PC-3 (cell line): ENCODE measurements at regions of chr6 and their contacts with region 1.

Region 1: DNA sequence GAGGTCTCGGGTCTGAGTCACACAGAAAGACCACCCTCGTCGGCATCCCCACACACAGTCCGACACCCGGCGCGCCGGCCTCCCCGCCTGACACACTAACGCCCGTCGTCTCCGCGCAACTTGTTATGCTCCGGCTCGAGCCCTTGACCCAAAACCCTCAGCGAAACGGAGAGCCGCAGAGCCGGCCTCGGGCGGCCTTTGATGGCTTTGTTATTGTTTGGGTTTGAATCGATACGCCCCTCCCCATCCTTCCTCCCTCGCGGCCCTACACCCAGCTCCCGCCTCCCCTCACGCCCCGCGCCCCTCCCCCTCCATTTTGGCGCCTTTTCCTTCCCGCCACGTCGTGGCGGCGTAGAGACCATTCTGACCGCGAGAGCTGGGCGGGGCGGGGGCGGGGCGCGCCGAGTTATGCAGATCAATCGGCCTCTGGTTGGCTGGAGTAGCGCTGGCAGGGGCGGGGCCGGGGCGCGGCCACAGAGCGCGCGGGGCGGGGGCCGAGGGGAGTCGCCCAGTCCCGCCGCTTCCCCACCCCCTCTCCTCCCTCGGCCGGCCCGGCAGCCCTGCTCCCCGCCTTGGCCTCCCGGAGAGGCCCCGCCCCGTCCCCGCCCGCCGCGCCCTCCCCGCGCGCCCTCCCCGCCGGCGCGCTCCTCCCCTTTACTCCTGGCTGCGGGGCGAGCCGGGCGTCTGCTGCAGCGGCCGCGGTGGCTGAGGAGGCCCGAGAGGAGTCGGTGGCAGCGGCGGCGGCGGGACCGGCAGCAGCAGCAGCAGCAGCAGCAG is at the start of gene PIM1:
- DNase-seq: peak; percentile 95
- ATAC-seq: peak; percentile 69
- H3K4me3 ChIP-seq: peak within 1 kb of the TSS; percentile 80
- H3K27ac ChIP-seq: peak within 1 kb of the TSS; percentile 78
- H3K4me1 ChIP-seq: peaks cover 13% of the 10 kb centered on the region
- H3K27me3 ChIP-seq: no peaks in the 10 kb centered on the region
- CTCF ChIP-seq: no peak
- total RNA-seq, gene PIM1: 74.1 and 93.3 TPM in 2 replicates

Region 2: DNA sequence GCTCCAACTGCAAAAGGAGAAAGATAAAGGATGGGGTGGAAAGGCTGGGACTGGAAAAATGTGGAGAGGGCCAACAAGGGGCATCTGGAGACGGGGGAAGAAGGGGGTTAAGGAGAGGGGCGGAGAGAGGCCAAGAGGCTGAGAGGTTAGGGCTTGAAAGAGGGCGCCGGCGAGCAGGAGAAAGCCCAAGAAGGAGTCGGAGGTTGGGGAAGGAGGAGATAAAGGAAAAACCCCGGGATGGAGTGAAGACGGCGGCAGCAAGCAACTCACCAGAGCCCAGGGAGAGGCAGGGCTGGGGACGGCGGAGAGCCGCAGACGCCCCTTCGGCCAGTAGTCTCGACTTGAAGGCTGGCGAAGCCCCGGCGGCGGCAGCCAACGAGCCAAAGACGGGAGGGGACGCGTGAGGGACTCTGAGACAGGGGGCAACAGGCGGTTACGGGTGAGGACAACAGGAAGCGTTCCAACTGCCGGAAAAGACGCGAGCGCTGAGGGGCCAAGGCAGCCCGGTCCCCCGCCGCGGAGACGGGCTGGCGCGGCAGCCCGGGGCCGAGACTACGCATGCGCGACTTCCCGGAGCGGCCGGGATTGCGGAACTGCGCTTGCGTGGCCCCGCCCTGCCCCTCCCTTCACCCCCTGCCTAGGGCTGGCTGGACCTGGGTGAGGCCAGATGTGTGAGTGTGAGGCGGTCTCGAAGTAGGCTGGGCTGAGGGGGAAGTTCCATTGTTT is 622.6 kb before region 1 on chr6 and contains the start of gene STK38:
- CTCF ChIA-PET with region 1: no interaction called
- POLR2A ChIA-PET with region 1: no interaction called
- intact Hi-C with region 1: no loop called
- DNase-seq: peak; percentile 89
- ATAC-seq: peak; percentile 91
- H3K4me3 ChIP-seq: peak within 1 kb of the TSS; percentile 94
- H3K27ac ChIP-seq: peak within 1 kb of the TSS; percentile 55
- H3K4me1 ChIP-seq: peaks cover 34% of the 10 kb centered on the region
- H3K27me3 ChIP-seq: no peaks in the 10 kb centered on the region
- CTCF ChIP-seq: peak; percentile 52
- total RNA-seq, gene STK38: 25.7 and 26.9 TPM in 2 replicates

Region 3: DNA sequence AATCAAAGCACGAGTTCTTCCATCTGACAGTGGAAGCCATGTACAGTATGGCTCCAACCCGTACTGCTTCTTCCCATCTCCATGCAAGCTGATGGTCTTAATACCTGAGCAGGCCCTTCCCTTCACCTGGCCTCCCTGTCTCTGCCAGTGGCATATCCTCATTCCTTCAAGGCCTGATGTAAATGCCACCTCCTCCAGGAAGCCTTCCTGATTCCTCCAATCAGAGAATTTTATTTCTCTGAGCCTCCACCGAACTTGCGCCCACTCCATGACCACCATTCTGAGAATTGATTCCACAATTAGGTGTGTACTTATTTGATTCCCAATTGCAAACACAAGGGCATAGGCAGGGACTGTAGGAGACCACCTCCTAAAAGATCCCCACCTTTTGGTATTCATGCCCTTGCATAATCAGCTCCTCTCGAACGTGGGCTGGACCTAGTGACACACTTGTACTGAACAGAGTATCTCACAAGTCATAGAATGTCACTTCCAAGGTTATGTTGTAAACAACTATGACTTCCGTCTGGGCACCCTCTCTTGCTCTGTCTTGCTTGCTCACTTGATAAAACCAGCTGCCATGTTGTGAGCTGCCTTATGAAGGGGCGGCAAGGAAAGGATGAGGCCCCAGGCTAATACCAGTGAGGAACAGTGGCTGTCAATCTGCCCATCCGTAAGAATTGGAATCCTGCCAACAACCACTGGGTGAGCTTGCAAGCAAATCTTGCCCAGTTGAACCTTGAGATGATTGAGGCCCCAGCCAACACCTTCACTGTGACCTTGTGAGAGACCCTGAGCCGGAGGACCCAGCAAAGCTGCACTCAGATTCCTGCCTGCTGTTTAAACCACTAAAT is 369.2 kb before region 1 on chr6:
- CTCF ChIA-PET with region 1: no interaction called
- POLR2A ChIA-PET with region 1: no interaction called
- intact Hi-C with region 1: no loop called
- DNase-seq: no peak
- ATAC-seq: no peak
- H3K4me3 ChIP-seq: no peak overlapping the region
- H3K27ac ChIP-seq: no peak overlapping the region
- H3K4me1 ChIP-seq: no peaks in the 10 kb centered on the region
- H3K27me3 ChIP-seq: no peaks in the 10 kb centered on the region
- CTCF ChIP-seq: no peak

Region 4: GRCh38 chr6:36874443-36875249 is 295.0 kb before region 1 on chr6 and contains the start of gene PPIL1:
- CTCF ChIA-PET with region 1: no interaction called
- POLR2A ChIA-PET with region 1: interaction called, 17 read pairs
- intact Hi-C with region 1: no loop called
- DNase-seq: peak; percentile 93
- ATAC-seq: peak; percentile 93
- H3K4me3 ChIP-seq: peak within 1 kb of the TSS; percentile 92
- H3K27ac ChIP-seq: peak within 1 kb of the TSS; percentile 86
- H3K4me1 ChIP-seq: peaks cover 18% of the 10 kb centered on the region
- H3K27me3 ChIP-seq: no peaks in the 10 kb centered on the region
- CTCF ChIP-seq: no peak
- total RNA-seq, gene PPIL1: 37.3 and 39.9 TPM in 2 replicates

Region 5: GRCh38 chr6:37018198-37019064 is 151.3 kb before region 1 on chr6:
- CTCF ChIA-PET with region 1: interaction called, 3 read pairs
- POLR2A ChIA-PET with region 1: interaction called, 10 read pairs
- intact Hi-C with region 1: loop called (anchors 1 kb)
- DNase-seq: peak; percentile 94
- ATAC-seq: peak; percentile 96
- H3K4me3 ChIP-seq: no peak overlapping the region
- H3K27ac ChIP-seq: peak overlapping the region; percentile 70
- H3K4me1 ChIP-seq: peaks cover 36% of the 10 kb centered on the region
- H3K27me3 ChIP-seq: no peaks in the 10 kb centered on the region
- CTCF ChIP-seq: peak; percentile 85

Region 6: GRCh38 chr6:37051138-37052026 is 118.3 kb before region 1 on chr6:
- CTCF ChIA-PET with region 1: interaction called, 7 read pairs
- POLR2A ChIA-PET with region 1: interaction called, 3 read pairs
- intact Hi-C with region 1: loop called (anchors 1 kb)
- DNase-seq: peak; percentile 86
- ATAC-seq: peak; percentile 68
- H3K4me3 ChIP-seq: no peak overlapping the region
- H3K27ac ChIP-seq: no peak overlapping the region
- H3K4me1 ChIP-seq: peaks cover 26% of the 10 kb centered on the region
- H3K27me3 ChIP-seq: no peaks in the 10 kb centered on the region
- CTCF ChIP-seq: peak; percentile 96

Region 7: GRCh38 chr6:37102279-37103168 is 67.2 kb before region 1 on chr6:
- CTCF ChIA-PET with region 1: interaction called, 6 read pairs
- POLR2A ChIA-PET with region 1: interaction called, 5 read pairs
- intact Hi-C with region 1: loop called (anchors 1 kb)
- DNase-seq: peak; percentile 82
- ATAC-seq: peak; percentile 66
- H3K4me3 ChIP-seq: peak overlapping the region; percentile 59
- H3K27ac ChIP-seq: peak overlapping the region; percentile 78
- H3K4me1 ChIP-seq: peaks cover 38% of the 10 kb centered on the region
- H3K27me3 ChIP-seq: no peaks in the 10 kb centered on the region
- CTCF ChIP-seq: no peak

Region 8: DNA sequence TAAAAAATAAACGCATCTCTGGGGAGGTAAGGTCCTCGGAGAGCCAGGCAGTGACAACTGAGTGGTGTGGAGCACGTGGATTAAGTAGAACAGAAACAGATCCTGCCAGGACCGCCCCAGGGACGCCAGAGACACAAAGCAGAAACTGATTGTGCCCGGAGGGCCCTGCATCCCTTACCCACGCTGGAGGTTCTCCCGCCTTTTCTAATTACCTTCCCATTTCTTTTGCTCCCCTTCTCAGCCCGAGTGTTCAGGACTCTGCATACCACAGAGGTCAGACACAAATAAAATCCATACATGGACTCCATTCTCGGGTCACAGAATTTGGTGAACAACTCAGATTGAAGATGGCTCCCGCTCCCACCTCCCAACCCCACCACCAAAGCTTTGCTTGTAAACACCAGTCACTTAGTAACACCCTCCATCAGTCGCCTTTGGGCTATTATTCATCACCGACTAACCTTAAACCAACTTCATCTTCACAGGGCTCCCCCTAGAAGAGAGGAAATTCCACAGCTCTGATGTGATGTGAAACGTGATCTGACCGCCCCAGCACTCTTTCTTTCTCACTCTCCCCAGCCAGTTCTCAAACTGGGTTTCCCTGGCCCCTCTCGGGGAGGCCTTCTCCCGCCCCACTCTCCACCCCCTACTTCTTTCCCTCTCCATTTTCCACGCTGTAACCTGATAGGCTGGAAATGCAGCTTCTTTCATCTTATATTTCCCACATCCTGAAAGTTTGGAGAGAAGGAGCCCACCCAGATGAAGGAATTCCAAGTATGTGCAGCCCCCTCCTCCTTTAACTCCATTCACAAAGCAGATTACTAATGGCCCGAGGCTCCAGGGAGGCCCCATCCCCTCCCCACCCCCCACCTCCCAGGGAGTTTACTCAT is 32.2 kb before region 1 on chr6:
- CTCF ChIA-PET with region 1: interaction called, 8 read pairs
- POLR2A ChIA-PET with region 1: interaction called, 11 read pairs
- intact Hi-C with region 1: loop called (anchors 1 kb)
- DNase-seq: peak; percentile 98
- ATAC-seq: peak; percentile 61
- H3K4me3 ChIP-seq: peak overlapping the region; percentile 37; the same call in 1 of the 2 replicates
- H3K27ac ChIP-seq: peak overlapping the region; percentile 99
- H3K4me1 ChIP-seq: peaks cover 69% of the 10 kb centered on the region
- H3K27me3 ChIP-seq: no peaks in the 10 kb centered on the region
- CTCF ChIP-seq: no peak